ENCODE measurements at regions of chr5 and their contacts with region 1.

Region 1: DNA sequence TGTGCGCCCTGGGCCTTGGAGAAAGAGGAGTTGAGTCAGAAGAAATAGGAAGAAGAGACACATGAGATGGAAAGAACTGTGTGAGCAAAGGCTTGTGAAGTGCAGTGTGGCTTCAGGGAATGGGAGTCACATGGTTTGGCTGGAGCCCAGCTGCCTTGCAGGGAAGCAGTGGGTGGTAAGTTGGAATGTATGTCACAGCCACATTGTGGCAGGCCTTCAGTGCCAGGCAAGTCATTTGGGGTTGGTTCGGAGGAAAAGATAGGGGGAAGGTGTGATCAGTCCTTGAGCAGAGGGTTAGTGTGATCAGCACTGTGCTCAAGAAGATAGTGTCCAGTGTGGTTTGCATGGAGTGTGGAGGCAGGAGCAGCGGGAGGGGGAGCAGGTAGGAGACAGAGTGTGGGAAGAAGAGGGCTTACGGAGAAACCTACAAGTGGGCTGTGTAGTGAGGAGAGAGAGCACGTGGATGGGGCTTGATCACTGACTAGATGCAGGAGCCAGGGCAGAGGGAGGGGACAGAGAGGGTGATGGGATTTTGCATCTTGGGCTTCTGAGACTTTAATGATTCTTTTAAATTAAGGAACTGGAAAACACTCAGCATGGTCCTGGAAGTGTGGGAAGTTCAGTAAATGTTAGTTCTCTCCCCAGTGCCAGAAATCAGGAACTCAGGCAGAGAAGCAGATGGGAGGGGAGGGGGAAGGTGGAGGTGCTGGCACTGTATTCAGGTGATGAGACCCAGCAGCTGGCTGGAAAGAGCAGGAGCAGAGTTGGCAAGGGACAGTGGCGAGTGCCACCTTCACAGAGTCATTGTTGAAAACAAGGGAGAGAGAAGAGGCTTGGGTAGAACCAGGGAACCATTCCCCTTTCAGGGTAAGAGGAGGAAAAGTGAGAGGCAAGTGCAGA is 46.6 kb downstream of the ARHGAP26 start:
- DNase-seq: peak; percentile 46 to 56
- ATAC-seq: peak in 5 of 8 donors; percentile 25 to 40 (median 36)
- H3K4me3 ChIP-seq: no peak overlapping the region
- H3K27ac ChIP-seq: peak overlapping the region; percentile 1 to 91 (median 49)
- H3K4me1 ChIP-seq: peaks cover 32 to 97% (median 81%) of the 10 kb centered on the region in 9 donors
- H3K27me3 ChIP-seq: no peaks in the 10 kb centered on the region
- CTCF ChIP-seq: no peak

Region 2: GRCh38 chr5:142783601-142784341 is 33.0 kb before region 1 on chr5:
- intact Hi-C with region 1: loop called in 2 of 10 experiments (anchors 5 kb)
- DNase-seq: peak; percentile 44 to 56
- ATAC-seq: peak; percentile 27 to 77 (median 62)
- H3K4me3 ChIP-seq: peak overlapping the region in 7 of 10 donors; percentile 0 to 36 (median 19)
- H3K27ac ChIP-seq: peak overlapping the region; percentile 36 to 91 (median 78)
- H3K4me1 ChIP-seq: peaks cover 35 to 94% (median 84%) of the 10 kb centered on the region in 9 donors
- H3K27me3 ChIP-seq: no peaks in the 10 kb centered on the region
- CTCF ChIP-seq: peak in 1 of 9 donors; percentile 9

Region 3: GRCh38 chr5:142874537-142874936 is 57.8 kb after region 1 on chr5:
- intact Hi-C with region 1: loop called in 2 of 10 experiments (anchors 5 to 10 kb)
- DNase-seq: peak; percentile 85 to 88
- ATAC-seq: peak; percentile 27 to 79 (median 69)
- H3K4me3 ChIP-seq: no peak overlapping the region
- H3K27ac ChIP-seq: peak overlapping the region in 8 of 10 donors; percentile 19 to 73 (median 50)
- H3K4me1 ChIP-seq: peaks cover 21 to 78% (median 64%) of the 10 kb centered on the region in 9 donors
- H3K27me3 ChIP-seq: no peaks in the 10 kb centered on the region
- CTCF ChIP-seq: no peak

Measured in heart right ventricle (tissue), 16 donors.